Activated T-helper 1 cell treated with anti-CD3 and anti-CD28 coated beads, Interleukin-12 subunit alpha, Interleukin-12 subunit beta, Interleukin-2, Interleukin-4 antibody, amounts not matched to agents 30 ng/mL and 10 ng/mL and 1 ng/mL, durations not matched to agents 14 hours and 24 hours and 36 hours (primary cell): ENCODE measurements at regions of chr13 and their contacts with region 1.

Region 1: DNA sequence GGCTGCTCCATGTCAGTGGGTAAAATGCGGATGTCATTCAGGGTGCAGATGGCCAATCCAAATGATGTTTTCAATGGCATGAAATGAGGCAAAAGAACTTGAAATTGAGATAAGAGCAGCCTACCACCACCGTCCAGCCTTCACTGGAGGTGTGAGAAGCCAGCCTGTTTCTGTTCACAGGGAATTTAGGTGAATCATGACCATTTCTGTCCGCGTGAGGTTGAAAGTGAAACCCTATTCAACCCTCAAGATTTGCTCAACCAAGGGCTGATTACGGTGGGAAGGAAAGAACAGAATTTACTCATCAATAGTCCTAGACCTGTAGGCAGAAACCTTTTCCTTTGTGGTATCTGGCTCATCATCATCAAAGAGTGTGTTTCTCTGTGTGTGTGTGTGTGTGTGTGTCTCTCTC is 370.7 kb downstream of the COG6 start:
- DNase-seq: peak; percentile 67
- H3K4me3 Mint-ChIP-seq: peak overlapping the region; percentile 24
- H3K27ac Mint-ChIP-seq: peak overlapping the region; percentile 48
- H3K4me1 Mint-ChIP-seq: peaks cover 59% of the 10 kb centered on the region
- H3K27me3 Mint-ChIP-seq: peaks cover 5% of the 10 kb centered on the region

Region 2: GRCh38 chr13:39942552-39943273 is 83.5 kb before region 1 on chr13:
- intact Hi-C with region 1: loop called (anchors 2 kb)
- DNase-seq: peak; percentile 54
- H3K4me3 Mint-ChIP-seq: no peak overlapping the region
- H3K27ac Mint-ChIP-seq: no peak overlapping the region
- H3K4me1 Mint-ChIP-seq: peaks cover 6% of the 10 kb centered on the region
- H3K27me3 Mint-ChIP-seq: peaks cover 4% of the 10 kb centered on the region

Region 3: DNA sequence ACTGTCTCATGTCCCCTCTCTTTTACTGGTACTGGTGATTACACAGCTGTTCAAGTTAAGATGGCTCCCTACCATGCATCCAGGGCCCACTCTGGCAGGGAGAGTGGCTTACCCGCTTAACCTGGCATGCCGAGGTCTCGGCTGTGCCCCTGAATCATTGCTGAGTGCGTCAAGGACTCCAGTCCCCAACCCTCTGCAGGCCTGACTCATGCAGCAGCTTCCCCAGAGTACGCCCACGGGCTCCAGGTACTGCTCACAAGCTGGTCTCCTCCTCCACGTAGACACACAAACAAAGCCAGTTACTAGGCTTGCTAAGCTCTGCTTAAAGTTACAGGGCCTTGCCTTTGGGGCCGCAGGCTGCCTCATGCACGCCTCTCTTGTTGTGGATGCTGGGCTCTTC is 76.7 kb after region 1 on chr13:
- intact Hi-C with region 1: loop called (anchors 1 kb)
- DNase-seq: peak; percentile 51
- H3K4me3 Mint-ChIP-seq: peak overlapping the region; percentile 74
- H3K27ac Mint-ChIP-seq: peak overlapping the region; percentile 97
- H3K4me1 Mint-ChIP-seq: peaks cover 64% of the 10 kb centered on the region
- H3K27me3 Mint-ChIP-seq: no peaks in the 10 kb centered on the region

Region 4: GRCh38 chr13:40164133-40164532 is 138.0 kb after region 1 on chr13:
- intact Hi-C with region 1: no loop called
- DNase-seq: no peak
- H3K4me3 Mint-ChIP-seq: no peak overlapping the region
- H3K27ac Mint-ChIP-seq: no peak overlapping the region
- H3K4me1 Mint-ChIP-seq: peaks cover 19% of the 10 kb centered on the region
- H3K27me3 Mint-ChIP-seq: peaks cover 2% of the 10 kb centered on the region

Region 5: GRCh38 chr13:40221460-40222201 is 195.5 kb after region 1 on chr13:
- intact Hi-C with region 1: loop called (anchors 1 kb)
- DNase-seq: no peak
- H3K4me3 Mint-ChIP-seq: peak overlapping the region; percentile 37
- H3K27ac Mint-ChIP-seq: peak overlapping the region; percentile 69
- H3K4me1 Mint-ChIP-seq: peaks cover 43% of the 10 kb centered on the region
- H3K27me3 Mint-ChIP-seq: no peaks in the 10 kb centered on the region

Region 6: DNA sequence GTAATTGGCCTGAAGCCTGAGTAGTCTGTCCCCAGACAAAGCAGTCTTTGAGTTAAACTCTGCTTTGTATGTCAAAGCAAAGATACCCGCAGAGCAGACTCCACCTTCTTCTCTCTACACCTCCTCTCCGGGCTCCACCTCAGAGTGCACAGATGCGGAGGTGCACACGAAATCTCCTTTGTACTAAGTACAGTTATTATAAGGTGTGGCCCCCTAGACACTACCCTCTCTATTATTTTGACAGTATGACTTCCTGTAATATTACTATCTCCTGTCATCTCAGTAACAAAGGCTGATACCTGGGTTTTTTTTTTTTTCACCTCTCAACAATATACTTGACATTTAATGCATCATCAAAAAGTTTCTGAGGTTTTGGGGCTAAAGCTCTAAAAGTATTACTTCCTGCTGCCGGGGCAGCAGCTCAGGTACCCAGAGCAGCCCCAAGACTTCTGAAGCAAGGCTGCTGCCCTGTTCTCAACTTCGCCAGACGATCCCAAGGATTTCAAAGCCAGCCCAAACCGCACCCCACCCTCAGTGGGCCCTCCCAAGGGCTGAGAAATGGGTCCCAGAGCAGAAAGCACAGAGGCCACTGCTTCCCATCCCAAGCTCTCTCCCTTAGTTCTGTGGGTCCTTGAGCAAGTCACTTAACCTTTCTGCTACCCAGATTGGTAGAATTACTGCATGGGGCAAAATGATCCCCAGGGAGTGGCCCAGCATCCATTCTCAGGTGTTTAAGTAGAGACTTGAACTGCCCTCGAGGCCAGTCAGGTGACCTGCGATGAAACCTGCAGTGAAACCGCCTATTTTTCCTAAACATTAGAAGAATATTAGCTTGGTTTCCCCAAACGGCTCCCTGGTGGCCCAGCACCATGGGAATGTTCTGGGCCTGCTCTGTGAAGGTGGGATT is 459.7 kb after region 1 on chr13:
- intact Hi-C with region 1: loop called (anchors 1 kb)
- DNase-seq: peak; percentile 50
- H3K4me3 Mint-ChIP-seq: peak overlapping the region; percentile 23
- H3K27ac Mint-ChIP-seq: peak overlapping the region; percentile 89
- H3K4me1 Mint-ChIP-seq: peaks cover 68% of the 10 kb centered on the region
- H3K27me3 Mint-ChIP-seq: no peaks in the 10 kb centered on the region

Region 7: DNA sequence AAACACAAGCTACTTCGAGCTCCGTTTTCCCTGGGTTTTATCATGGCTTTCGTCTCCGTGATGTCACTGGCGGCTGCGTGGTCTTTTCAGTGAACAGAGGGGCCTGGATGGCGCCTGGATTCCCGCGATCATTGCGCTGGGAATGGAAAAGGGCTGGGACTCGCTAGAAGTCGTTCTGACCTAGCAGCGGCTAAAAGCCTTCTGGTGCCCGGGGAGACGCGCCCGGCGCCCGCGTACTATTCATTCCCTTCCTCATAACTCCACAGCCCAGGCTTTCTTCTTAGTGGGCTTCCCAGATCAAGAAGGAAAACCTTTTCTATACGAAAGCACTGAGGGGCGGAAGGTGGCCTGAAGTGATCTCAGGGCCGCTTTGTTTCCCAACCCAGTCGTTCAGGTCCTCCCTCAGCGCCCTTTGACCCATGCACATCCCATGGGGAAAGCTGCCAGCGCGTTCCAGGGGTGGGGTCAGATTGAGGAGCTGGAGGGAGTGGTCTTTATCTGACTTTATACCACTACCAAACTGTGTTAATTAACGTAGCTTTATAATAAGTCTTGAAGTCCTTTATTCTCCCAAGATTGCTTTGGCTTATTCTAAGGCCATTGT is 896.4 kb after region 1 on chr13:
- intact Hi-C with region 1: loop called (anchors 1 kb)
- DNase-seq: no peak
- H3K4me3 Mint-ChIP-seq: peak overlapping the region; percentile 77
- H3K27ac Mint-ChIP-seq: peak overlapping the region; percentile 70
- H3K4me1 Mint-ChIP-seq: peaks cover 10% of the 10 kb centered on the region
- H3K27me3 Mint-ChIP-seq: peaks cover 1% of the 10 kb centered on the region